ENCODE measurements at regions of chr2 and their contacts with region 1.

Region 1: DNA sequence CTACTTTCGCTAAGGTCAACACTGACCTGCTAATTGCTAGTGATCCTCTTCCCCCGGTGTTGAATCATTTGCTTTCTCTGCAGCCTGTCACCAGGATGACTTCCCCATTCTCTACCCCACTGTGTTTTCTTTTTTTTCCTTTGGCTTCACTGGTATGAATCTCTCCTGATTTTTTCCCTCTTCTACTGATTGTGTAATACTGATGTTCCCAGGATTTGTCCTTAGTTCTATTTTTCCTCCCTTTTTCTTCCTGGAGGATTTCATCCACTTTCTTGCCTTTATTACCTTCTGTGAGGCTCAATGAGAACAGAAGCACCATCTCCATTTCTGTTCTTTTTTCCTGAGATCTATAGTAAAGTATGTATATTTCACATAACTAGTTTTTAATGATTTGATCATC is 14.1 kb upstream of the MSH2 start:
- DNase-seq: no peak
- ATAC-seq: no peak
- H3K4me3 ChIP-seq: no peak overlapping the region
- H3K27ac ChIP-seq: no peak overlapping the region
- H3K4me1 ChIP-seq: no peaks in the 10 kb centered on the region
- H3K27me3 ChIP-seq: no peaks in the 10 kb centered on the region

Region 2: GRCh38 chr2:47109007-47109375 is 279.9 kb before region 1 on chr2:
- intact Hi-C with region 1: no loop called
- DNase-seq: no peak
- ATAC-seq: no peak
- H3K4me3 ChIP-seq: no peak overlapping the region
- H3K27ac ChIP-seq: no peak overlapping the region
- H3K4me1 ChIP-seq: no peaks in the 10 kb centered on the region
- H3K27me3 ChIP-seq: no peaks in the 10 kb centered on the region

Region 3: DNA sequence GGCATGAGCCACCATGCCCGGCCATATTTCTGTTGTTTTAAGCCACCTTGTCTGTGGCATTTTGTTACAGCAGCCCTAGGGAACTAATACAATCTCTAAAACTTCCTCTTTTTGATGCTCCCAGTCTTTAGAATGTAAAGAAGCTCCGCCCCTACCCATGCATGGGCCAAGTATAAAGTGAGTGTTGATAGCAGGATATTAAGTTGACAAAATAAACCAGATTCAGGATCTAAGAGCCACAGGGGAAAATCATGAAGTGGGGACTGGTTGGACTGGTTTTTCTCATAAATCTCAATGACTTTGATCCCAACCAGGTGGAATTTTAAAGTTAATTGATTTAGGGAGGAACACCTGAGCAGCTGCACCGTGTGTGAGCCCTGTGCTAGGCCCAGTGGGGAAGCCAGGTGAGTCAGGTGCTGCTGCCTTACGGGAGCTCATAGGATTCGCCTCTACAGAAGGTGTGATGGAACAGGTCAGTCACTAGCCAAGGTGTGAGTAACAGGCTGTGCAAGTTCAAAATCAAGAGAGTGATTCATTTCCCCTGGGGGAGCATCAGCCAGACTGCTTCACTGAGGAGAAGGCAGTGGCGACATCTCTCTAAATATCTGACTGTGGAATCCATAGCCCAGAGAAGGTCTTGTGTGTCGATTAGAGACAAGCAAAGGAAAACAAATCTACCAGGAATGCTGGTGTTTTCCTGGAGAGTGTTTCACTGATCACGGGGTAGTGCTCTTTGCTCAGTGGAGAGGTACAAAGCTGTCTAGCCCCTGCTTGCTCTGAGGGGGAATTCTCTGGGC is 48.9 kb before region 1 on chr2:
- intact Hi-C with region 1: loop called (anchors 1 to 2 kb)
- DNase-seq: no peak
- ATAC-seq: no peak
- H3K4me3 ChIP-seq: no peak overlapping the region
- H3K27ac ChIP-seq: no peak overlapping the region
- H3K4me1 ChIP-seq: no peaks in the 10 kb centered on the region
- H3K27me3 ChIP-seq: no peaks in the 10 kb centered on the region

Region 4: GRCh38 chr2:47437287-47437686 is 48.4 kb after region 1 on chr2:
- intact Hi-C with region 1: no loop called
- DNase-seq: no peak
- ATAC-seq: no peak
- H3K4me3 ChIP-seq: no peak overlapping the region
- H3K27ac ChIP-seq: no peak overlapping the region
- H3K4me1 ChIP-seq: peaks cover 1 to 3% of the 10 kb centered on the region in 2 donors
- H3K27me3 ChIP-seq: no peaks in the 10 kb centered on the region